PC-3 (cell line): ENCODE measurements at regions of chr3 and their contacts with region 1.

Region 1: GRCh38 chr3:175410251-175410650 is 551.1 kb downstream of the NAALADL2 start:
- DNase-seq: peak; percentile 20
- ATAC-seq: peak; percentile 11; the same call in 1 of the 2 replicates
- H3K4me3 ChIP-seq: no peak overlapping the region
- H3K27ac ChIP-seq: no peak overlapping the region
- H3K4me1 ChIP-seq: peaks cover 23% of the 10 kb centered on the region
- H3K27me3 ChIP-seq: no peaks in the 10 kb centered on the region
- CTCF ChIP-seq: no peak

Region 2: DNA sequence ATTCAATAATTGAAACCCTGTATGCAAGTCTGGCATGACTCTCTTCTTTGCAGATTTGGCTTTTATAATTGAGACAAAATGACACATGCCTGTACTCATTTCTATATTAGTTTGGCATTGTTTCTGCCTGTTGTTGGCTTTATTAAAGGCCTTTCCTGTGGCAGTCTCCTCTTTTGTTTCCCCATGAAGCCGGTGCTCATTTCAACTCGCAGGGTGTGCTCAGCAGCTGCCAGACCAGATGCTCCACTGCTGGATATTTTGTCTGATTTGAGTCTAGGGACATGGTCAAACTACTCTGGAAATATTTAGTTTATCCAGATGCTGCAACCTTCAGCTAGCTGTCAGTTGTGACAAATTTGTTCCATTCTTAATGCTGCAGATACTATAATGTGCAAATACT is 105.8 kb before region 1 on chr3:
- CTCF ChIA-PET with region 1: no interaction called
- POLR2A ChIA-PET with region 1: no interaction called
- intact Hi-C with region 1: no loop called
- DNase-seq: no peak
- ATAC-seq: no peak
- H3K4me3 ChIP-seq: no peak overlapping the region
- H3K27ac ChIP-seq: no peak overlapping the region
- H3K4me1 ChIP-seq: peaks cover 13% of the 10 kb centered on the region
- H3K27me3 ChIP-seq: no peaks in the 10 kb centered on the region
- CTCF ChIP-seq: no peak

Region 3: DNA sequence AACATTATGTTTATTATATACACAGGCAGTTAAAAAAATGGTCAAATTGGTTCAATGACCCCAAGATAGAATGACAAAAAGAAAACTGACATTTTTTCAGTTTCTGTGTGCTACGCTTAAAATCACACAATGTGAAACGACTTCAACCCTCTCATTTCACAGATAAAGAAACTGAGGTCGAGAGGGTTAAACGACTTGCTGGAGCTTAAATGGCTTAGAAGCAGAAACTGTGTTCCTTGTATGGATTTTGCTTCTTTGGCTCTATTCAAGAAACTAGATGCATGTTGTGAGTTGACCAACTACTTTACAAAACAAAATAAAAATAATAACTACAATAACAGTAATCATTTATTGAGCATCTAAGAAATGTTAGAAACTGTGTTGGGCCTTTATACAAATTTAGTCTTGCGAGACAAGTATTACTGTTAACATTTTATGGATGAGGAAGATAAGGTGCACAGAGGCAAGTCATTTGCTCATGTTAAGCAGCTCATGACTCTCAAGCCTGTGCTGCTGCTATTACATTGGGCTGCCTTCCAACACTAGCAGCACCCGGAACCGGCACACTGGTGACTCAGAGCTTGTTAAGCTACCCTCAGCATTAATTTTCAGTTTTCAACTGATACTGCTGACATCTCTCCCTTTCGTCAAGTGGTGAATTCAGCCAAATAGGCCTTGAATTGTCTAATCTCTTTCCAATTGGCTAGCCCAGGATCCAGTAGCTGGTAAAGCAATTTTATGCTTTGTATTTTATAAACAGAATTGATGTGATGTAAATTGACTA is 63.5 kb before region 1 on chr3:
- CTCF ChIA-PET with region 1: no interaction called
- POLR2A ChIA-PET with region 1: no interaction called
- intact Hi-C with region 1: loop called (anchors 2 kb)
- DNase-seq: peak; percentile 92
- ATAC-seq: peak; percentile 99
- H3K4me3 ChIP-seq: no peak overlapping the region; the same call in 1 of the 2 replicates
- H3K27ac ChIP-seq: peak overlapping the region; percentile 66
- H3K4me1 ChIP-seq: peaks cover 14% of the 10 kb centered on the region
- H3K27me3 ChIP-seq: no peaks in the 10 kb centered on the region
- CTCF ChIP-seq: no peak

Region 4: DNA sequence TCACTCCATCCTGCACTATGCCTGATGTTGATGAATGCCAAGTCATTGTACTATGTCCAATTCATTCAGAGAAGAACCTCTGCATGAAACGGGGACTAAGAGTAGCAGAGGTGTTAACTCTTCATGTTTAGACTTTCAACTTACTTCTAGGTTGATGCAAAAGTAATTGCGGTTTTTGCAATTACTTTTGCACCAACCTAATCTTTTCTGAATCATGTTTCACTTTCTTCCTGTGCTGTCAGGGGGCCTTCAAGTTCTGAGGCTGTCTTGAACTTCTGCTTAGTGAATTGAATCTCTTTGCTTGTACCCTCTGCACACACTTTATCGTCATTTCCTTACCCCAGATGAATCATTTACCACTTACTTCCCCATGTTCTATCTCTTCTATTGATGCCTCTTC is 85.1 kb after region 1 on chr3:
- CTCF ChIA-PET with region 1: no interaction called
- POLR2A ChIA-PET with region 1: no interaction called
- intact Hi-C with region 1: no loop called
- DNase-seq: no peak
- ATAC-seq: no peak
- H3K4me3 ChIP-seq: no peak overlapping the region
- H3K27ac ChIP-seq: no peak overlapping the region
- H3K4me1 ChIP-seq: no peaks in the 10 kb centered on the region
- H3K27me3 ChIP-seq: no peaks in the 10 kb centered on the region
- CTCF ChIP-seq: no peak

Region 5: GRCh38 chr3:175851541-175851940 is 441.3 kb after region 1 on chr3:
- CTCF ChIA-PET with region 1: no interaction called
- POLR2A ChIA-PET with region 1: no interaction called
- intact Hi-C with region 1: no loop called
- DNase-seq: no peak
- ATAC-seq: no peak
- H3K4me3 ChIP-seq: no peak overlapping the region
- H3K27ac ChIP-seq: no peak overlapping the region
- H3K4me1 ChIP-seq: no peaks in the 10 kb centered on the region
- H3K27me3 ChIP-seq: no peaks in the 10 kb centered on the region
- CTCF ChIP-seq: no peak